ENCODE measurements at regions of chr2 and their contacts with region 1.

Region 1: DNA sequence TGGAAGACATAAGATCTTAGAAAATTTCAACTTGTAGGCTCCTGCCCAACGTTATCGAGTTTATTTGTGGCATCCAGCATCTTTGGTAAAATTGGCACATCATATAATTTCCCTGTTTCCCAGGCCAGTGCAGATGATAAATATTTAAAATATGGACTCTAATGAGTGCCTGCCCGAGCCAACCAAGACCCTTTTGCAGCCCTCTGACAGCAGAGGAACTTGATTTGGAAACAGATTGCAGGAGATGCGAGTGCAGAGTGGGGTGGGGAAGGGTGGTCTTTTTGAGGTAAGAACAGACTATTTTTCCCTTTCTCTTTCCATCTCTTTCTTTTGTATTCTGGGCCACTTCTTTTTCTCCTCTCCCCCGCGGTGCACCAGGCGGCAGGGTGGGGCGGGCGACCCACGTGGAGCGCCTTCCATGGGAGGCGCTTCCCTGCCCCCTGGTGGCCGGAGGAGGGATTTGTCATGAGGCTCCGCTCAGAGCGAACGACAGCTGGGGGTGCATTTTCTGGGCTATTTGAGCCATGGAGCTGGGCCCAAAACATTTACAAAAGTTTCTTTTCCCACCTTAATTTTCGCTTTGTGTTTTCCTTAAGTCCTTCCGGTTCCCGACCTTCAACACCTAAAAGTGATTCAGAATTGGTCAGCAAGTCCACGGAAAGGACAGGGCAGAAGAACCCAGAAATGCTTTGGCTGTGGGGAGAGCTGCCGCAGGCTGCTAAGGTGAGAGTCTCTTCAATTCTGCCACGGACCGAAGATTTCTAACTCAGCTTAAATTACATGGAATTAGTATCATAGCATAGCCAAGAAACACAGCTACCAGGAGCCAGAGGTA is 32.7 kb downstream of the LPIN1 start:
- DNase-seq: peak; percentile 93

Region 2: GRCh38 chr2:11465497-11466406 is 313.4 kb before region 1 on chr2 and contains the start of gene E2F6:
- intact Hi-C with region 1: loop called in 1 of 2 experiments (anchors 5 kb)
- DNase-seq: peak; percentile 98
- total RNA-seq, gene E2F6: 13.3 to 13.9 TPM

Region 3: DNA sequence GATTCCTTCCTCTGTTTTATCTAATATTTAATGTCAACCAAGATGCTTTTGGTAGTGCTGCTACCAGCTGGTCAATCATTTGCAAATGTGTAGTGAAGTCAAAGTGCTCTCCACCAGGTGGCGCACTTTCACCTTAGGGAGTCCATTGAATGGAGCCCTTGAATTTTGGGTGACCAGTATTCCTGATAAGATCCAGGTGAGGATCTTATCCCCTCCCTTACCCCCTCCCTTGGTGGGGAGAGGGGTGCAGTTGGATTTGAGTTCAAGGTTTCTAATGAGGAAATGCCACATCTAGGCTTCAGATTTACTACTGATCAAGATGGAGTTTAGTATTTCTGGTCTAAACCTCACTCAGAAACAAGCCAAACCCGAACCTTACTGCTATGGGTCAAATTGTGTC is 301.1 kb before region 1 on chr2:
- intact Hi-C with region 1: loop called in 1 of 2 experiments (anchors 5 kb)
- DNase-seq: peak; percentile 94

Region 4: GRCh38 chr2:11692966-11693521 is 86.1 kb before region 1 on chr2:
- intact Hi-C with region 1: loop called (anchors 2 to 5 kb)
- DNase-seq: no peak